MCF 10A (cell line): ENCODE measurements at regions of chr13 and their contacts with region 1.

Region 1: GRCh38 chr13:36346222-36347083 is at the start of gene SPART:
- DNase-seq: peak; percentile 91
- H3K4me3 Mint-ChIP-seq: peak within 1 kb of the TSS; percentile 82
- H3K27ac Mint-ChIP-seq: peak within 1 kb of the TSS; percentile 97
- H3K4me1 Mint-ChIP-seq: peaks cover 13% of the 10 kb centered on the region
- H3K27me3 Mint-ChIP-seq: no peaks in the 10 kb centered on the region
- CTCF ChIP-seq: peak; percentile 92
- total RNA-seq, gene SPART: 83.1 and 100.0 TPM in 2 replicates

Region 2: GRCh38 chr13:36332986-36333385 is 13.5 kb before region 1 on chr13:
- CTCF ChIA-PET with region 1: interaction called, 4 read pairs
- POLR2A ChIA-PET with region 1: interaction called, 16 read pairs
- intact Hi-C with region 1: no loop called
- DNase-seq: peak; percentile 45
- H3K4me3 Mint-ChIP-seq: no peak overlapping the region
- H3K27ac Mint-ChIP-seq: no peak overlapping the region
- H3K4me1 Mint-ChIP-seq: peaks cover 29% of the 10 kb centered on the region
- H3K27me3 Mint-ChIP-seq: no peaks in the 10 kb centered on the region
- CTCF ChIP-seq: no peak

Region 3: DNA sequence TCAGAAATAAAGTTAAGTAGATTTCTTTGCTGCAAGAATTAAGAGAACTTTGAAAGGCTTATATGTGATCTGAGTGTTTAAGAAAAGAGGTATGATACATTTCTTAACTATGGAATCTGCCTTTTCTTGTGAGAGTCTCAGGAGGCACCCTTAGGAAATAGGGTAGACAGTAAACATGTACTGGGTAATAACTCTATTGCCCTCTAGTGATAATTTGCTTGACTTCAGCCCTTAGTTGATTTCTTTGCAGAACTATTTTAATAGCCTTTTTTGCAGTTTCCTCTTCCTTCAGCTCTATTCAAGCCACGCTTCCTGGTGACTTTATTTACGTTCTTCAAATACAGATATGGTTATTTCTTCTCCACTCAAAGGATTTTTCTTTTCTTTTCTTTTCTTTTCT is 48.8 kb after region 1 on chr13:
- CTCF ChIA-PET with region 1: interaction called, 50 read pairs
- POLR2A ChIA-PET with region 1: interaction called, 6 read pairs
- intact Hi-C with region 1: loop called (anchors 1 kb)
- DNase-seq: peak; percentile 35
- H3K4me3 Mint-ChIP-seq: no peak overlapping the region
- H3K27ac Mint-ChIP-seq: no peak overlapping the region
- H3K4me1 Mint-ChIP-seq: no peaks in the 10 kb centered on the region
- H3K27me3 Mint-ChIP-seq: no peaks in the 10 kb centered on the region
- CTCF ChIP-seq: peak; percentile 39

Region 4: DNA sequence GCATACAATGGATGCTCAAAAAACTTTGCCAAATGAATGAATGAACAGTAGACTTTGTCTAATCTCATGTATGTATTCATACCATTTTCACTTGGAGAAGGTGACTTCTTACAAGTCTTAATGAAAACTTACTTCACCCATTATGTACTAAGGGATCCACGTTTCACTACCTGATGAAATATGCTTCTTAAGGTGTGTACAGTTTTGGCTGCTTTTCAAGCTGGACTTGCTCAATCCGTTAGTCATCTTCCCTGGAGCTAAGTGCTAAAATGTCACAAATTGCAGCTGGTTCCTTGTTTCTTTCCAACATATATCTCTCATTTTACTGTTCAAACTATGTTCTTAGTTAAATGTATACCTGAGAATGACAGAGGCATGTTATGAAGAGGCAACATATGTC is 81.6 kb after region 1 on chr13:
- CTCF ChIA-PET with region 1: no interaction called
- POLR2A ChIA-PET with region 1: interaction called, 13 read pairs
- intact Hi-C with region 1: no loop called
- DNase-seq: peak; percentile 93
- H3K4me3 Mint-ChIP-seq: peak overlapping the region; percentile 13
- H3K27ac Mint-ChIP-seq: peak overlapping the region; percentile 84
- H3K4me1 Mint-ChIP-seq: peaks cover 18% of the 10 kb centered on the region
- H3K27me3 Mint-ChIP-seq: no peaks in the 10 kb centered on the region
- CTCF ChIP-seq: no peak

Region 5: DNA sequence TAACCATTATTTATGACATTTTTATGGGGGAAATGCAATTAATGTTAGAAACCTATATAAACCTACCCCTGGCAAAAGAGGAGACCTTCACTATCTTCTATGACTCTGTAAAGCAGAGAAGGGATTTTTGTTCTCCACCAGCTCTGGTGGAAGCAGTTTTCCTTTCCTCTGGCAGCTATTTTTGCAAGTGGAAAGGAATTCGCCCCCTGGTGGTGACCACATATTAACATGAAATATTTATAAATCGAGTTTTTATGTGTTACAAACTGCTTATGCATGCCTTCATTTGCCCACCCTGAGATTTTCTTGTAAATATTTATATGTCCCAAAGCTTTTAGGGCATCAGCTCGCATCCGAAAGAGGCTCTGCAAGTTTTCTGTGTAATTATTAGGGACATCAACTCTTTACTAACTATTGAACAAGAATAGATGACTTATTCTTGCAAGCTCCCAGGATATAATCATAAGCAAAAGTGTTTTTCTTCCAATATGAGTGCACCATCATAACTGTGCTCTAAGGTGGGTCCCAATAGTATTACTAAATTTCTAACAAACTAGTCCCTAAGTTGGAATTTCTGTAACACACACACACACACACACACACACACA is 389.8 kb after region 1 on chr13:
- CTCF ChIA-PET with region 1: interaction called, 15 read pairs
- POLR2A ChIA-PET with region 1: interaction called, 5 read pairs
- intact Hi-C with region 1: loop called (anchors 1 kb)
- DNase-seq: peak; percentile 62
- H3K4me3 Mint-ChIP-seq: no peak overlapping the region
- H3K27ac Mint-ChIP-seq: no peak overlapping the region
- H3K4me1 Mint-ChIP-seq: no peaks in the 10 kb centered on the region
- H3K27me3 Mint-ChIP-seq: no peaks in the 10 kb centered on the region
- CTCF ChIP-seq: peak; percentile 69

Region 6: DNA sequence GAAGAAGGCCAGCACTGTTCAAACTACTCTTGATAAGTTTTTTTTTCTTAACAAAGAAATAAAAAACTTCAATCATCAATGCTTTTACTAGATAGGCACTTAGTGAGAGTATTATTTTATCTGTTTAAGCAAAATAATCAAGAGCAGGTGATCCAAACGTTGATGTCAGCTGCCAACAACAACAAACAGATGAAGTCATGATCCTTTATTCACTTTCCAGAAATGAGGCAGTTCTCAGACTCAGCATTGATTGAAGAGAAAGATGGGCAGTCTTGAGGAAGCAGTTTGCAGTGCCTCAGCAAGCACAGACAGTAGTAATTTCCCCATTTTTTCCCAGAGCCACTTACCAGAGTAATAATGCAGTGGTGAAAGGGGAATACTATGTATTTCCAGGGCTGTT is 797.5 kb after region 1 on chr13:
- CTCF ChIA-PET with region 1: no interaction called
- POLR2A ChIA-PET with region 1: no interaction called
- intact Hi-C with region 1: no loop called
- DNase-seq: peak; percentile 5
- H3K4me3 Mint-ChIP-seq: no peak overlapping the region
- H3K27ac Mint-ChIP-seq: no peak overlapping the region
- H3K4me1 Mint-ChIP-seq: peaks cover 10% of the 10 kb centered on the region
- H3K27me3 Mint-ChIP-seq: no peaks in the 10 kb centered on the region
- CTCF ChIP-seq: no peak